Activated CD8-positive, alpha-beta T cell treated with anti-CD3 and anti-CD28 coated beads for 36 hours (primary cell): ENCODE measurements at regions of chr21 and their contacts with region 1.

Region 1: DNA sequence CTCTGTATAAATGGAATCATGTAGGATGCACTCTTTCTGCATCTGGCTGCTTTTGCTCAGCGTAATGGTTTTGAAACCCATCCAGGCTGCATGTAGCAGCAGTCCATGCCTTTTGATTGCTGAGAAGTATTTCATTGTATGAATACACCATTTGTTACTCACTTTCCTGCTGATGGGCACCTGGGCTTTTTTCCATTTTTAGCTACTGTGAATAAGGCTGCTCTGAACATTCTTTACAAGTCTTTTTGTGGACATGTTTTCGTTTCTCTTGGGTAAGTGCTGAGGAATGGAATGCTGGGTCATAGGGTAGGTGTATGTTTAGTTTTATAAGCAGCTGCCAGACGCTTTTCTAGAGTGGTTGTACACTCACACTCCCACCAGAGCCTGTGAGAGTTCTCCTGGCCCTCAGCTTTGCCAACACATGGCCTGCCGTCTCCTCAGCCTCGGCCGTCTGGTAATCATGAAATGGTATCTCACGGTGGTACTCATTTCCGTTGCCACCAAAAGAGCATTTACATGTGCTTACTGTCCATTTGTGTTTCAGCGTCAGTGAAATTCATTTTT is 22.7 kb downstream of the SLX9 start:
- DNase-seq: no peak
- ATAC-seq: no peak
- H3K4me3 Mint-ChIP-seq: no peak overlapping the region
- H3K27ac Mint-ChIP-seq: no peak overlapping the region
- H3K4me1 Mint-ChIP-seq: peaks cover 28% of the 10 kb centered on the region
- H3K27me3 Mint-ChIP-seq: no peaks in the 10 kb centered on the region
- CTCF ChIP-seq: no peak

Region 2: DNA sequence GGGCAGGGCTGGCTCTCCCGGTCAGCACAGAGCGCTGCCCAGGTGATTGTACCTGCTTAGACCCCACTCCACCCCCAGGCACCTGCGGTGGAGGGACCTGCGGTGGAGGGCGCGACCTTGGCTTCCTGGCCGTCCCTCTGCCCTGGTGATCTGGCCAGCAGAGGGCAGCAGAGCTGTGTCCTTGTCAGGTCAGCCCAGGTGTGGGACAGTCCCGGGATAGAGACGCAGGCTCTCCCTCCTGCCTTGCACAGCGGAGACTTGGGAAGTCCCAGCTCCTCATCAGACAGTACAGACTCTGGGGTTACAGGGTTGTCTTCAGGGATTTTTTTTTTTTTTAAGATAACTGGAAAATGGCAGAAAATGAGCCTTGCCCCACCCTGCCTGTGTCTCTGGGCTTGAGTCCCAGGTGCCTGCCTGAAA is 12.7 kb before region 1 on chr21:
- CTCF ChIA-PET with region 1: interaction called, 19 read pairs
- POLR2A ChIA-PET with region 1: interaction called, 4 read pairs
- intact Hi-C with region 1: no loop called
- DNase-seq: peak; percentile 89
- ATAC-seq: peak; percentile 90
- H3K4me3 Mint-ChIP-seq: no peak overlapping the region
- H3K27ac Mint-ChIP-seq: no peak overlapping the region
- H3K4me1 Mint-ChIP-seq: peaks cover 12% of the 10 kb centered on the region
- H3K27me3 Mint-ChIP-seq: no peaks in the 10 kb centered on the region
- CTCF ChIP-seq: peak; percentile 94